Panc1 (cell line): ENCODE measurements at regions of chr17 and their contacts with region 1.

Region 1: GRCh38 chr17:43367737-43368242 is 31.0 kb upstream of the ARL4D start:
- DNase-seq: peak; percentile 93
- ATAC-seq: peak; percentile 76
- H3K4me3 ChIP-seq: peak overlapping the region; percentile 27 to 50; a peak in 3 of 4 replicates
- H3K27ac ChIP-seq: peak overlapping the region; percentile 94
- H3K4me1 ChIP-seq: peaks cover 12% of the 10 kb centered on the region
- H3K27me3 ChIP-seq: no peaks in the 10 kb centered on the region
- CTCF ChIP-seq: no peak

Region 2: GRCh38 chr17:43356999-43357398 is 10.8 kb before region 1 on chr17:
- CTCF ChIA-PET with region 1: no interaction called
- POLR2A ChIA-PET with region 1: interaction called, 16 read pairs
- in situ Hi-C with region 1: no loop called
- intact Hi-C with region 1: no loop called
- DNase-seq: no peak
- ATAC-seq: 0 out of 2 replicates have a peak, but pooled peaks have one; percentile 13
- H3K4me3 ChIP-seq: no peak overlapping the region
- H3K27ac ChIP-seq: no peak overlapping the region
- H3K4me1 ChIP-seq: peaks cover 27% of the 10 kb centered on the region
- H3K27me3 ChIP-seq: no peaks in the 10 kb centered on the region
- CTCF ChIP-seq: no peak

Region 3: GRCh38 chr17:43388359-43389045 is 20.7 kb after region 1 on chr17:
- CTCF ChIA-PET with region 1: no interaction called
- POLR2A ChIA-PET with region 1: interaction called, 19 read pairs
- in situ Hi-C with region 1: no loop called
- intact Hi-C with region 1: no loop called
- DNase-seq: no peak
- ATAC-seq: peak; percentile 95
- H3K4me3 ChIP-seq: peak overlapping the region; percentile 61 to 65
- H3K27ac ChIP-seq: peak overlapping the region; percentile 90
- H3K4me1 ChIP-seq: peaks cover 4% of the 10 kb centered on the region
- H3K27me3 ChIP-seq: no peaks in the 10 kb centered on the region
- CTCF ChIP-seq: no peak